Motor neuron (in vitro differentiated cells): ENCODE measurements at regions of chr12 and their contacts with region 1.

Region 1: DNA sequence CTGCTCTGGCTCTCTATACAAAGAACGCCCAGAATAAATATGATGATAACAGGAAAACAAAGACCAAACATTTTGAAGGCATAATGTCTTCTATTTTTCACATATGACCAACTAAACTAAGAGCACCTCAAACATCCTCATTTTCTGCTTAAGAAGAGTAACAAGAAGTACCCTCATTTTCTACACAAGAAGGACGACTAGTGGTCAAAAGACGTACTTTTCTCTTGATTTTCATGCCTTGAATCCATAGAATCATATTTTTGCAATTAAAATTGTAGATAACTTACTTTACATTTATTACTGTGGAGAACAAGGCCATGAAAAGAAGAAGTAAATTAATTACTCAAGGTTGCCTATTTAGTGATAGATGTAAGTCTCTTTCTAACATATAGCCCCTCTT is 358.6 kb downstream of the DUSP6 start:
- ATAC-seq: peak in 3 of 8 experiments; percentile 16 to 76 (median 48)
- H3K4me3 ChIP-seq: no peak overlapping the region
- H3K27ac ChIP-seq: no peak overlapping the region
- H3K4me1 ChIP-seq: no peaks in the 10 kb centered on the region

Region 2: DNA sequence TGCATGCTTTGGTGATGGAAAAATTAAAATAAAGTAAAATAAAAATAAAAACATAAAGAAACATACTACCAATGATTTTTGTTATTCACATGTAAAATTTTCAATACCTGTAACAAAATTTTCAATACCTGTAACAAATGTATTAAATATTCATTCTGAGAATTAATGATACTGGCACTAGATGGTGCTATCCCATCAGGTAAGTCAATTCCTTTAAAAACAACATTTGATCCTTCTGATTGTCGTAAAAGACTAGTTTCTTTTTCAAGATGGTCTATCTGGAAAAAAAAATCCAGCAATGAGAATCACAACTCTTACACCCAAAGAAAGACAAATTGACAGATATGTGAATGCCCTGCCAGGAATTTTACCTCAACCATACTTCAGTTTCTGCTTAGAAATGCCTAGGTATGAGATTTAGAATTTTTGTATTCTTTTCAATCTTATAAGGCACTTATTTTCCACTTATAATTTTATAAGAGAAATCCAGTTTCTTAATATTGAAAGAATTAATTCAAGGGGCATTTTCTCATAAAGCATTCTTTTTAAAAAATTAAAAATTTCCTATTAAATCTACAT is 882.5 kb before region 1 on chr12:
- in situ Hi-C with region 1: loop called in 1 of 9 experiments (anchors 25 kb)
- ATAC-seq: no peak
- H3K4me3 ChIP-seq: no peak overlapping the region
- H3K27ac ChIP-seq: no peak overlapping the region
- H3K4me1 ChIP-seq: no peaks in the 10 kb centered on the region

Region 3: DNA sequence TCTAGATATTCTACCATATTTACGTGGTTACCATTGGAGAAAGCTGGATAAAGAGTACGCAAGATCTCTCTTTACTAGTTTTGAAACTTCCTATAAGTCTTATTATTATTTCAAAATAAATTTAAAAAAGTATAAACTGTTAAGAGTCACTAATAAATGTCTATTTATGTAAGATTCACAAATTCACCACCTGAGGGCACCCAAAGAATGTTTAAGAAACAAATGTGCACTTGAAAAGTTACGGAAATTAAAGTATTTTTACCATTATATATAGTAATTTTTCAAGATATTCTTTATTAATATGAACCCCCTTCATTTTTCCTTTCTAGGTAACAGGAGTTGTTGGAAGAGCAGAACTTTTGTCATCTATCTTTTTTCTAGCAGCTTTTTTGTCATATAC is 839.7 kb before region 1 on chr12:
- in situ Hi-C with region 1: loop called in 2 of 9 experiments (anchors 25 kb)
- ATAC-seq: no peak
- H3K4me3 ChIP-seq: no peak overlapping the region
- H3K27ac ChIP-seq: no peak overlapping the region
- H3K4me1 ChIP-seq: no peaks in the 10 kb centered on the region

Region 4: GRCh38 chr12:88580051-88580871 is 413.4 kb before region 1 on chr12 and contains the start of gene KITLG:
- in situ Hi-C with region 1: loop called in 1 of 9 experiments (anchors 25 kb)
- ATAC-seq: peak; percentile 86 to 93 (median 91)
- H3K4me3 ChIP-seq: peak within 1 kb of the TSS; percentile 45 to 86 (median 67)
- H3K27ac ChIP-seq: peak within 1 kb of the TSS in 1 of 2 donors; percentile 11
- H3K4me1 ChIP-seq: peaks cover 12 to 29% of the 10 kb centered on the region in 2 donors
- total RNA-seq, gene KITLG: 2.3 to 26.9 (median 12.0) TPM

Region 5: DNA sequence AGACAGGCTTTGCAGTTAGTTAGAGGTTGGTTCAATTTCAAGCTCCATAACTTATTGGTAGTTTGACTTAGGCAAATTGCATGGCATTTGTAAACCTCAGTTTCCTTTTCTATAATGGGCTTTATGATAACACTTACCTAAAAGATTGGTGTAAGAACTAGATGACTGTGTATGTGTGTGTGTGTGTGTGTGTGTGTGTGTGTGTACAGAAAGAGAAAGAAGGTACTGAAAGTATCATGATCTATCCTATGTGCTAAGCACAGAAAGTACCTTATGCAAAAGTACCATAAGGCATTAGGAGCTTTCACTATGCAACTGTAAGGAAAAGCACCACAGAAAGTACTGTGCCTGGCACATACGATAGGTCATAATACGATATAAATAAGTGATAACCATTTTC is 109.1 kb before region 1 on chr12:
- in situ Hi-C with region 1: no loop called
- ATAC-seq: no peak
- H3K4me3 ChIP-seq: no peak overlapping the region
- H3K27ac ChIP-seq: no peak overlapping the region
- H3K4me1 ChIP-seq: peaks cover 0 to 4% of the 10 kb centered on the region in 2 donors